Left colon (tissue), 2 donors: ENCODE measurements at regions of chr12 and their contacts with region 1.

Region 1: GRCh38 chr12:92570056-92570753 is 132.6 kb upstream of the PLEKHG7 start:
- DNase-seq: peak in 1 of 2 donors; percentile 59
- ATAC-seq: peak; percentile 74

Region 2: GRCh38 chr12:91804533-91804932 is 765.7 kb before region 1 on chr12:
- intact Hi-C with region 1: loop called in 1 of 2 experiments (anchors 10 kb)
- DNase-seq: no peak
- ATAC-seq: no peak